ENCODE measurements at regions of chr7 and their contacts with region 1.

Region 1: GRCh38 chr7:47714669-47715607 is 133.0 kb upstream of the TNS3 start:
- DNase-seq: no peak
- H3K4me3 ChIP-seq: no peak overlapping the region
- H3K27ac ChIP-seq: no peak overlapping the region
- H3K4me1 ChIP-seq: no peaks in the 10 kb centered on the region
- H3K27me3 ChIP-seq: no peaks in the 10 kb centered on the region
- CTCF ChIP-seq: no peak
- POLR2A ChIP-seq: no peak

Region 2: DNA sequence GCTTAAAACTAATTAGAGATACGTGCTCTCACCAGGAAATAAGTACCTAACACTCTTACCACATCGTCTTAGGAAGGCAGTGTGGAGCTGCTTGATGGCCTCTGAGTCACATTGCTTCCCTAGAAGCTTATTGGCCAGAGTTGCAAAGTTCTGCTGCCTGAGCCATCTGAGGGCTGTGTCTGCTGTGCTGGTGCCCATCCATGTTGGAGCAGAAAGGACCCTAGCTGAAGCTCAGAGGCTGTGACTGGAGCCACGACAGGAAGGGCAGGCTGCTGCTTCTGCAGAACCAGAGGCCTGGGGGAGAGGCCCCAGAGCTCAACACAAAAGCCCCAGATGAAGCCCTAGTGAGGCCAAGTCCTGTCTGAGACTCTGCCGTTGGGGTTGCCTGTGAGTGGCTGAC is 1729.0 kb before region 1 on chr7:
- intact Hi-C with region 1: no loop called
- DNase-seq: no peak
- H3K4me3 ChIP-seq: no peak overlapping the region
- H3K27ac ChIP-seq: no peak overlapping the region
- H3K4me1 ChIP-seq: peaks cover 0 to 8% of the 10 kb centered on the region in 2 donors
- H3K27me3 ChIP-seq: no peaks in the 10 kb centered on the region
- CTCF ChIP-seq: no peak
- POLR2A ChIP-seq: no peak

Region 3: GRCh38 chr7:46720761-46721160 is 994.2 kb before region 1 on chr7:
- intact Hi-C with region 1: loop called (anchors 5 kb)
- DNase-seq: no peak
- H3K4me3 ChIP-seq: no peak overlapping the region
- H3K27ac ChIP-seq: no peak overlapping the region
- H3K4me1 ChIP-seq: no peaks in the 10 kb centered on the region
- H3K27me3 ChIP-seq: no peaks in the 10 kb centered on the region
- CTCF ChIP-seq: no peak
- POLR2A ChIP-seq: no peak

Region 4: DNA sequence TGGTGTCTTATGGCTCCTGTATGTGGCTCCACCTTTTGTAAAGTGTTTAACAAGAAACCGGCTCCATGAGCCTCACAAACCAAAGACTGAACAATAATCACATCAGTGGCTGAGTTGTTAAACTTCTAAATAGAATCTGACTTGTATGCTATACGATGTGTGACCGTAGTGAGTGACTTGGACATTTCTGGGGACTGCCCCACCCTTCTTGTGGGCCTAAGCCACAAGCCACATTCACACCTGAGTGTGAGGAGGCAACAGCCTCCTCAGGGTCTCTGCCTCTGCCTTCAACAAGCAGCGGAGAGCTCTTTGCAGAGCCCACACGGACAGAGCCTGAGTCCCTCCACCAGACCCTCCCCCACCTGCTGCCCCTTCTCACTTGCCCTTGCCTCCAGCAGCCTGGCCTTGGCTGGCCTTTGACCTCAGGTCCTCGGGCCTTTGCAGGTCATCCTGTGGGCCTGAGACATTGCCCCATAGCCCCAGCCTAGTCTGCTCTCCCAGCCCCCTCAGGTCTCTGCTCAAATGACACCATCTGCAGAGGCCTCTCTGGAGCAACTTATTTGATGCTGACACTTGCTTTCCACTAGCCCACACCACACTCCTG is 23.7 kb after region 1 on chr7:
- intact Hi-C with region 1: loop called (anchors 1 kb)
- DNase-seq: no peak
- H3K4me3 ChIP-seq: no peak overlapping the region
- H3K27ac ChIP-seq: no peak overlapping the region
- H3K4me1 ChIP-seq: no peaks in the 10 kb centered on the region
- H3K27me3 ChIP-seq: no peaks in the 10 kb centered on the region
- CTCF ChIP-seq: no peak
- POLR2A ChIP-seq: no peak

Measured in breast epithelium (tissue), 4 donors.